ENCODE measurements at regions of chr7 and their contacts with region 1.

Region 1: DNA sequence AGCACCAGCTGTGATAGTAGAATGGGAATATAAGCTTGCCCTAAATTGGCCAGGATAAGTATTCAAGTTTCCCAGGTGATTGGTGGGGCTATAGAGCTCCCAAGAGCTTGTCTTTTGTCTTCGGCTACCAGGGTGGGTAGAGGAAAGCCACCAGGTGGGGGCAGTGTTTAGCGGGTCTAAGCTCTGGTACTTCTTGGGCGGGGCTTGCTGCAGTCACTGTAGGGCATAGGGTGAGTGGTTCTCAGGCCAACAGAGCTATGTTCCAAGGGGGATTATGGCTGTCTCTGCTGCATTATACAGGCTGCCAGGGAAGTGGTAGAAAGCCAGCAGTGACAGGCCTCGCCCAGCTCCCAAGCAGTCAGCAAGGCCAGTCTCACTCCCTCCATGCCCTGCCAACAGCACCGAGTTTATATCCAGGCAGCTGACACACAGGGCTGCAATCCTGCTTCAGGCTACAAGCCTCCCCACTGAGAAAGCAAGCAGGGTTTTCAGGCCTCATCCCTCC is 110.7 kb downstream of the ZNF467 start:
- DNase-seq: peak; percentile 85
- H3K4me3 Mint-ChIP-seq: no peak overlapping the region
- H3K27ac Mint-ChIP-seq: no peak overlapping the region
- H3K4me1 Mint-ChIP-seq: no peaks in the 10 kb centered on the region
- H3K27me3 Mint-ChIP-seq: peaks cover 17% of the 10 kb centered on the region

Region 2: GRCh38 chr7:149742075-149742701 is 79.5 kb after region 1 on chr7:
- CTCF ChIA-PET with region 1: interaction called, 163 read pairs
- POLR2A ChIA-PET with region 1: interaction called, 9 read pairs
- intact Hi-C with region 1: loop called (anchors 1 kb)
- DNase-seq: peak; percentile 69
- H3K4me3 Mint-ChIP-seq: peak overlapping the region; percentile 58
- H3K27ac Mint-ChIP-seq: no peak overlapping the region
- H3K4me1 Mint-ChIP-seq: peaks cover 11% of the 10 kb centered on the region
- H3K27me3 Mint-ChIP-seq: peaks cover 22% of the 10 kb centered on the region

Region 3: GRCh38 chr7:149748076-149748874 is 85.6 kb after region 1 on chr7:
- CTCF ChIA-PET with region 1: interaction called, 47 read pairs
- POLR2A ChIA-PET with region 1: no interaction called
- intact Hi-C with region 1: no loop called
- DNase-seq: no peak
- H3K4me3 Mint-ChIP-seq: no peak overlapping the region
- H3K27ac Mint-ChIP-seq: no peak overlapping the region
- H3K4me1 Mint-ChIP-seq: no peaks in the 10 kb centered on the region
- H3K27me3 Mint-ChIP-seq: no peaks in the 10 kb centered on the region

Region 4: DNA sequence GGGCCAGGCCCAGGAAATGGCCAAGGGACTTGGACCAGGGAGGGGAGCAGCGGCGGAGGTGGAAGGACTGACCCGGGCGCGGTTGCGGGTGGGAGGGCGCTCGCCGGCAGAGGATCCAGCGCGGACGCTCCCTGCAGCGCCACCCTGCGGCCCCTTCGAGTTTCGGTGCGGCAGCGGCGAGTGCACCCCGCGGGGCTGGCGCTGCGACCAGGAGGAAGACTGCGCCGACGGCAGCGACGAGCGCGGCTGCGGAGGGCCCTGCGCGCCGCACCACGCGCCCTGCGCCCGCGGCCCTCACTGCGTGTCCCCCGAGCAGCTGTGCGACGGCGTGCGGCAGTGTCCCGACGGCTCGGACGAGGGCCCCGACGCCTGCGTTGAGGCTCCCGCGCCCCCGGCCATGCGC is 127.5 kb after region 1 on chr7:
- CTCF ChIA-PET with region 1: interaction called, 14 read pairs
- POLR2A ChIA-PET with region 1: no interaction called
- intact Hi-C with region 1: no loop called
- DNase-seq: peak; percentile 60
- H3K4me3 Mint-ChIP-seq: no peak overlapping the region
- H3K27ac Mint-ChIP-seq: no peak overlapping the region
- H3K4me1 Mint-ChIP-seq: peaks cover 3% of the 10 kb centered on the region
- H3K27me3 Mint-ChIP-seq: peaks cover 22% of the 10 kb centered on the region

Region 5: DNA sequence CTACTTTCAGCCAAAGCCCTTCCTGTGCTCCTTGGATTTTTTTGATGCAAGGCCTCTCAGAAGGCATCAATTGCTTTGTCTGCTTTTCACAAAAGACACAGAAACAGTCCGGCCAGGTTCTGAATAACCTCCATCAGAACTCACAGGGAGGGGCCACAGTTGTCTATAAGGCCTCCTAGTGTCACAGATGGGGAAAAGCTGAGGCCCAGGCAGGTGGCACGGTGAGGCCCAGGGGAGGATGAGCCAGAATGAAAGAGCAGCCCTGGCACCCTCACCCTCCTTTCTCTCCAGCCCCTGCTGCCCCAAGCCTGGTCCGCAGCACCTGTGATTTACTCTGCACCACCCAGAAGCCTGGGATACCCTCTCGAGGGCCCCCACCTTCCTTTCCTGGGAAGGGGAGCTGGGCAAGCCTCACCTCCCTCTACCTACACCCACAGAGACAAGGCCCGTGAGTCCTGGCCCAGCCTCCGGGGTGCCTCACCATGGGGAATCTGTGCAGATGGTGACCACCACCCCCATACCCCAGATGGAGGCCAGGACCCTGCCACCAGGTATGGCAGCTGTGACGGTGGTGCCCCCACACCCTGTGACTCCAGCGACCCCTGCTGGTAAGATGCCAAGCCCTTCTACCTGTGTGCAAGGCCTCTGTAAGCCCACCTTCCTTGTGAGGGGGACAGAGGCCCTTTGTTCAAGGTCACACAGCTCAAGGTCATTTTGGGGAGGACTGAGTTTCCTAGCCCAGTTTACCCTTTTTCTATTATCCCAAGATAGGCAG is 136.9 kb after region 1 on chr7:
- CTCF ChIA-PET with region 1: interaction called, 37 read pairs
- POLR2A ChIA-PET with region 1: no interaction called
- intact Hi-C with region 1: loop called (anchors 1 kb)
- DNase-seq: peak; percentile 67
- H3K4me3 Mint-ChIP-seq: no peak overlapping the region
- H3K27ac Mint-ChIP-seq: no peak overlapping the region
- H3K4me1 Mint-ChIP-seq: no peaks in the 10 kb centered on the region
- H3K27me3 Mint-ChIP-seq: no peaks in the 10 kb centered on the region

Measured in activated CD4-positive, alpha-beta memory T cell treated with anti-CD3 and anti-CD28 coated beads for 36 hours (primary cell).